ENCODE measurements at regions of chr9 and their contacts with region 1.

Region 1: GRCh38 chr9:71806901-71807307 is 38.6 kb upstream of the CEMIP2 start:
- DNase-seq: peak; percentile 23
- H3K4me3 ChIP-seq: no peak overlapping the region
- H3K27ac ChIP-seq: no peak overlapping the region
- H3K27me3 ChIP-seq: peaks cover 2% of the 10 kb centered on the region
- CTCF ChIP-seq: peak; percentile 98

Region 2: GRCh38 chr9:71496310-71496709 is 310.6 kb before region 1 on chr9:
- CTCF ChIA-PET with region 1: no interaction called
- POLR2A ChIA-PET with region 1: no interaction called
- DNase-seq: no peak
- H3K4me3 ChIP-seq: no peak overlapping the region
- H3K27ac ChIP-seq: no peak overlapping the region
- H3K27me3 ChIP-seq: no peaks in the 10 kb centered on the region
- CTCF ChIP-seq: no peak

Region 3: DNA sequence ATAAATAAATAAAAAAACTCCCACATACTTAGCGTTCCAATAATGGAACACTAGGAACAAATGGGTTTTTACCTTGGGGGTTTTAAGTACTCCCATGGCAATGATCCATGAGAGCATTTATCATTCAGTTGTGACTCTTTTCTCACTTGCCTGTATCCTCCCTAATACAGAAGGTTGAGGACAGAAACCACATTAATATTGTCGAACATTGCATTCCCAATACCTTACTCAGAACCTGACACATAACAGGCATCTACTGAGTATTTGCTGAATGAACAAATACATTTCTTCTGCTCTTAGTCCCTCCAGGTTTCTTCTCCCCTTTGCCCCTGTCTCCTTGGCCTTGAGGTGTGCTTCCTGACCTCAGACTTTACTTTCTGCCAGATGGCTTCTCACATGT is 214.5 kb before region 1 on chr9:
- CTCF ChIA-PET with region 1: no interaction called
- POLR2A ChIA-PET with region 1: no interaction called
- DNase-seq: no peak
- H3K4me3 ChIP-seq: no peak overlapping the region
- H3K27ac ChIP-seq: no peak overlapping the region
- H3K27me3 ChIP-seq: no peaks in the 10 kb centered on the region
- CTCF ChIP-seq: no peak

Region 4: GRCh38 chr9:71604197-71605063 is 202.5 kb before region 1 on chr9:
- CTCF ChIA-PET with region 1: interaction called, 32 read pairs
- POLR2A ChIA-PET with region 1: no interaction called
- DNase-seq: peak; percentile 54
- H3K4me3 ChIP-seq: no peak overlapping the region
- H3K27ac ChIP-seq: no peak overlapping the region
- H3K27me3 ChIP-seq: no peaks in the 10 kb centered on the region
- CTCF ChIP-seq: peak; percentile 89

Region 5: GRCh38 chr9:71783120-71783530 is 23.8 kb before region 1 on chr9:
- CTCF ChIA-PET with region 1: interaction called, 13 read pairs
- POLR2A ChIA-PET with region 1: no interaction called
- DNase-seq: no peak
- H3K4me3 ChIP-seq: no peak overlapping the region
- H3K27ac ChIP-seq: no peak overlapping the region
- H3K27me3 ChIP-seq: no peaks in the 10 kb centered on the region
- CTCF ChIP-seq: no peak

Region 6: DNA sequence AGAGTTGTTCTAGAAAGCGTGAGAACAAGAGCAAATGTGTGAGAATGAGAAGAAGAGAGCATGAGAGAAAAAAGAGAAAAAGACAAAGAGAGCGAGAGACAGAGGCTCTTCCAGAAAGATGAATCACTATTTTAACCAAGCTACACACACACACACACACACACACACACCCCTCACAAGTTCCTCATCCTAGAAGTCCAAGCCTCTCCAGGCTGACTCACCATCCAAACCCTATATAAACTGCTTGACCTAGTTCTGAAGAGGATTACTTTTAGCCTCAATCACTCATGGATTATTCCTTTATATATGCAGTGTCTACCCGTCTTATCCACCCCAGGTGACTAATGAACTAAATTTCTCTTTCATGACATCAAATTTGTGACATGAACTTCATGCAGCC is 215.9 kb after region 1 on chr9:
- CTCF ChIA-PET with region 1: interaction called, 193 read pairs
- POLR2A ChIA-PET with region 1: no interaction called
- DNase-seq: peak; percentile 47
- H3K4me3 ChIP-seq: no peak overlapping the region
- H3K27ac ChIP-seq: no peak overlapping the region
- H3K27me3 ChIP-seq: no peaks in the 10 kb centered on the region
- CTCF ChIP-seq: no peak

Region 7: DNA sequence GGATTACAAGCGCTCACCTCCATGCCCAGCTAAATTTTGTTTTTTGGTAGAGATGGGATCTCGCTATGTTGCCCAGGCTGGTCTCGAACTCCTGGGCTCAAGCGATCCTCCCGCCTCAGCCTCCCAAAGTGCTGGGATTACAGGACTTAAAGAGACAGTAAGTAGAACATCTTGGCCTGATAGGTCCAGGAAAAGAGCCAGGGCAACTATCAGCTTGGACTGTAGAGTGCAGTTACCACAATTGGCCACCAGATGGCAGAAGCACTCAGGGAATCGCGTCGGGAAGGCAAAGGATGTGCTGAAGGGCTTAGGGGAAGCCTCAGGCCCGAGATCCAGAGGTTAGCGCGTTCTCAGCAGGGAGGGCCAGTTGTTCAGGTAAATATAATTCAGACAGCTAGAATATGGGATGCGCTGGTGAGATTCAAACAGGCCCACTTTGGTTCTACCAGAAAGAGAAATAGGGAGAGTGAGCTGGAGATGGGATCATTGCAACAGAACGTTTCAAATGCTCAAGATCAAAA is 232.0 kb after region 1 on chr9:
- CTCF ChIA-PET with region 1: interaction called, 17 read pairs
- POLR2A ChIA-PET with region 1: no interaction called
- DNase-seq: peak; percentile 61
- H3K4me3 ChIP-seq: no peak overlapping the region
- H3K27ac ChIP-seq: no peak overlapping the region
- H3K27me3 ChIP-seq: peaks cover 6% of the 10 kb centered on the region
- CTCF ChIP-seq: peak; percentile 96

Region 8: GRCh38 chr9:72119853-72120252 is 312.9 kb after region 1 on chr9:
- CTCF ChIA-PET with region 1: no interaction called
- POLR2A ChIA-PET with region 1: no interaction called
- DNase-seq: no peak
- H3K4me3 ChIP-seq: no peak overlapping the region
- H3K27ac ChIP-seq: no peak overlapping the region
- H3K27me3 ChIP-seq: no peaks in the 10 kb centered on the region
- CTCF ChIP-seq: no peak